Gastrocnemius medialis (tissue), 4 donors: ENCODE measurements at regions of chr2 and their contacts with region 1.

Region 1: GRCh38 chr2:96816128-96816835 is at the start of gene CNNM3:
- DNase-seq: peak; percentile 96
- ATAC-seq: peak; percentile 73 to 81
- H3K4me3 ChIP-seq: peak within 1 kb of the TSS; percentile 63 to 75 (median 67)
- H3K27ac ChIP-seq: peak within 1 kb of the TSS; percentile 92 to 96 (median 94)
- H3K4me1 ChIP-seq: peaks cover 52 to 59% of the 10 kb centered on the region in 2 donors
- H3K27me3 ChIP-seq: no peaks in the 10 kb centered on the region
- CTCF ChIP-seq: peak; percentile 60 to 82 (median 78)
- POLR2A ChIP-seq: peak; percentile 84 to 96
- total RNA-seq, gene CNNM3: 3.3 to 9.8 (median 8.6) TPM

Region 2: GRCh38 chr2:96594691-96595152 is 221.6 kb before region 1 on chr2:
- in situ Hi-C with region 1: no loop called
- intact Hi-C with region 1: loop called (anchors 5 kb)
- DNase-seq: no peak
- ATAC-seq: no peak
- H3K4me3 ChIP-seq: no peak overlapping the region
- H3K27ac ChIP-seq: peak overlapping the region in 1 of 4 donors; percentile 91
- H3K4me1 ChIP-seq: peaks cover 41 to 55% of the 10 kb centered on the region in 2 donors
- H3K27me3 ChIP-seq: no peaks in the 10 kb centered on the region
- CTCF ChIP-seq: no peak
- POLR2A ChIP-seq: no peak

Region 3: DNA sequence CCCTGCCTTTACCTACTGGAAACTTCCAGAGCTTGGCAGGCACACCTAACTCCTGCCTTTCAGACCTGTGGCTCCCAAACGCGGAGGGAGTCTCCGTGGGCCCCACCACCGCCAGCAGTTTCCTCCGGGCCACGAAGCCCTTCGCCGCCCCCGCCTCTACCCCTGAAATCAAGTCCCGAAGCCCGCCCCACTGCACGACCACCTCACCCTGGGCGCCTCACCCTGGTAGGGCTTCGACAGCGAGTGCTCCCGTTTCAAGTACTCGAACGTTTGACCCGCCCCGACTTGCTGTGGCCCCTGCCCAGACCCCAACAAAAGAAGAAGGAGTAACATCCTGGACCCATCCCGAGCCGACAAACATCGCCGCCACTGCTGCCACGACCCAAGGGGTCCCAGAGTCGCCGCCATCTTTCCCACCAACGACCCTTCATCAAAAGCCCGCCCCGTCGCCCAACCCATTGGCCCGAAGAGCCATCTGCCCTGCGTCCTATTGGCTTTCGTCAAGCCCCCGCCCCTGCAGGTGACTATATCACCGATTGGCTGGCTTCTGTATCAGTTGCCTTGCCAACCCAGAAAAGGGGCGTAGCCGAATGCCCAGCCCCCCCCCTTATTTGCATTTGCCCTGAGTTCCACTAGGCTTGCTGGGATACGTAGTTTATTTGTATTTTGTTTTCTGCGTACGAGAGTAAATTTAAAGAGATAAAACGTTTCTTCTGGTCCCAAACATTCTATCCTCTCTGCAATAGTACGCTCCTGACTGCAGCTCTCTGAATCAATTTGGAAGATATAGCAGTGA is 76.5 kb before region 1 on chr2 and contains the start of gene LMAN2L:
- in situ Hi-C with region 1: no loop called
- intact Hi-C with region 1: loop called (anchors 1 kb)
- DNase-seq: peak; percentile 98 to 99
- ATAC-seq: peak; percentile 98 to 99
- H3K4me3 ChIP-seq: peak within 1 kb of the TSS; percentile 77 to 90 (median 84)
- H3K27ac ChIP-seq: peak within 1 kb of the TSS; percentile 85 to 88 (median 88)
- H3K4me1 ChIP-seq: peaks cover 15 to 16% of the 10 kb centered on the region in 2 donors
- H3K27me3 ChIP-seq: no peaks in the 10 kb centered on the region
- CTCF ChIP-seq: peak in 2 of 5 experiments; percentile 11 to 21
- POLR2A ChIP-seq: peak; percentile 57 to 64
- total RNA-seq, gene LMAN2L: 8.8 to 17.3 (median 16.4) TPM

Region 4: DNA sequence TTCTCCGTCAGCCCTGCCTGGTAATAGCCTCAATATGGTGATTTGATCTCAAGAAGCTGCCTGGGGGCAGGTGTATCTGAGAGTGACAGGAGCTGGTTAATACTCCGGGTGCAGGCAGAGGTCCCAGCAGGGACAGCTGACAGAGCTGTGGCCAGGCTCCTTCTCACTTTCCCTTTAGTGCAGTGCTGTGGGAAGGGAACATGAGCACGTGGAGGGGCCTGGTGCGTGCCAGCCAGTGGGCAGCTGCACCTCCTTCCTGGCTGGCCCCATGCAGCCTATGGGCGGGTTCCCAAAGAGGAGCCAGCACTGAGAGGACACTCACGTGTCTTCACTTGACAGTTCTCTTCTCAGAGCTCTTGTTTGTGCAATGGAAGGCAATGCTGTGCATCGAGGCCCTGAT is 46.5 kb before region 1 on chr2:
- in situ Hi-C with region 1: no loop called
- intact Hi-C with region 1: loop called (anchors 1 kb)
- DNase-seq: peak; percentile 95 to 98
- ATAC-seq: peak; percentile 96 to 97
- H3K4me3 ChIP-seq: peak overlapping the region in 2 of 4 donors; percentile 17 to 18
- H3K27ac ChIP-seq: peak overlapping the region; percentile 89 to 95 (median 92)
- H3K4me1 ChIP-seq: peaks cover 27 to 29% of the 10 kb centered on the region in 2 donors
- H3K27me3 ChIP-seq: no peaks in the 10 kb centered on the region
- CTCF ChIP-seq: peak in 1 of 5 experiments; percentile 17
- POLR2A ChIP-seq: peak in 1 of 2 donors; percentile 51

Region 5: DNA sequence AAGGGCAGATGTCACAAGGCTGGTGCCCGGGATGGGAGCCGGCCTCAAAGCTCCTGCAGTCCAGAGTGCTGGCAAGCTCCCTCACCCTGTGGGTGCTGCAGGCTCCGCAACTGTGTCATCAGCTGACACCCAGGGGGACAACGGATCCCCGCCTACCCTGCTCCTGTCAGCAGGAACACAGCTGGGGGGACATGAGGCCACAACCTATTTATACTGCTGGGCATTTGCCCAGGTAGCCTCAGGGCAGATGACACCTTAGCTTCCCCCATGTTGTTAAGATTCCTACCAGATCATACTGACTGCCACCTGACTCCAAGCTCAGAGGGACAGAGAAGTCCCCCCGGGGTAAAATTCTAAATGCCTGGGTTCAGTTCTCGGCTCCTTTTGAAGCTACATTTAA is 26.3 kb after region 1 on chr2:
- in situ Hi-C with region 1: no loop called
- intact Hi-C with region 1: loop called (anchors 1 kb)
- DNase-seq: peak; percentile 96 to 99
- ATAC-seq: peak; percentile 71 to 82
- H3K4me3 ChIP-seq: peak overlapping the region; percentile 52 to 65 (median 64)
- H3K27ac ChIP-seq: peak overlapping the region; percentile 94 to 99 (median 96)
- H3K4me1 ChIP-seq: peaks cover 21 to 44% of the 10 kb centered on the region in 2 donors
- H3K27me3 ChIP-seq: no peaks in the 10 kb centered on the region
- CTCF ChIP-seq: no peak
- POLR2A ChIP-seq: peak; percentile 83 to 94

Region 6: DNA sequence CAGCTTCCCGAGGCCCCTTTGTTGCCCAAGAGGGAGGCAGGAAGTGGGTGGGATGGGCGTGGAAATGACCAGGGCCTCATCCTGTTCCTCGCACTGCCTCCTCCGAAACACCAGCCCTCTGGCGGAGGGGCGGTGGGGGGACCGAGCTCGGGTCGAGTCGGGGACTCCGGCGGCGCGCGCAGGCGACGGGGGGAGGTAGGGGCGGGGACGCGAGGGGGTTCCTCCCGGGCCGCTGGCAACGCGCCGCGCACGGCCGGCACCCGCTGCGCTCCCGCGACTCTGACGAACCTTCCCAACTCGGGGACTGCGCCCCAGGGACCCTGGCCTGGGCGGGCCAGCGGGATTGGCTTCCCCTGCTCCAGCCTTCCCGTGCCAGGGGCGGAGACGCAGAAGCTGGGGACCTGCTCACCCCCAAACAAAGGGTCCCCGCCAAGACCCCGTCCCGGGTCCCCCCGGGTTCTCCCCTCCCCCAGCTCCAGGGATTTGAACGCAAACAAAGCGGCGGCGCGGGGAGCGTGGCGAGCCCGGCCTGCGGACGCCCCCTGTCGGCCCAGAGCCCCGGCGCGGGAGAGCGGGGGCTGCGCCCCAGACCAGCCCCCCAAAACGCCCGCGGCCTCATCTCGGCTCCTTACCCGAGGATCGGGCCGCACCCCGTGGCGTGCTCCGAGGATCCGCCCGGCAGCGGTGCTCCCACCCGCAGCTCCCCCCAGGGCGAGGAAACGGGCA is 52.4 kb after region 1 on chr2:
- in situ Hi-C with region 1: no loop called
- intact Hi-C with region 1: loop called (anchors 1 kb)
- DNase-seq: peak; percentile 68 to 75
- ATAC-seq: peak; percentile 56
- H3K4me3 ChIP-seq: peak overlapping the region; percentile 74 to 95 (median 80)
- H3K27ac ChIP-seq: peak overlapping the region; percentile 86 to 90 (median 87)
- H3K4me1 ChIP-seq: peaks cover 24 to 29% of the 10 kb centered on the region in 2 donors
- H3K27me3 ChIP-seq: no peaks in the 10 kb centered on the region
- CTCF ChIP-seq: peak; percentile 55 to 73 (median 68)
- POLR2A ChIP-seq: peak; percentile 35 to 43